ENCODE measurements at regions of chr10 and their contacts with region 1.

Region 1: DNA sequence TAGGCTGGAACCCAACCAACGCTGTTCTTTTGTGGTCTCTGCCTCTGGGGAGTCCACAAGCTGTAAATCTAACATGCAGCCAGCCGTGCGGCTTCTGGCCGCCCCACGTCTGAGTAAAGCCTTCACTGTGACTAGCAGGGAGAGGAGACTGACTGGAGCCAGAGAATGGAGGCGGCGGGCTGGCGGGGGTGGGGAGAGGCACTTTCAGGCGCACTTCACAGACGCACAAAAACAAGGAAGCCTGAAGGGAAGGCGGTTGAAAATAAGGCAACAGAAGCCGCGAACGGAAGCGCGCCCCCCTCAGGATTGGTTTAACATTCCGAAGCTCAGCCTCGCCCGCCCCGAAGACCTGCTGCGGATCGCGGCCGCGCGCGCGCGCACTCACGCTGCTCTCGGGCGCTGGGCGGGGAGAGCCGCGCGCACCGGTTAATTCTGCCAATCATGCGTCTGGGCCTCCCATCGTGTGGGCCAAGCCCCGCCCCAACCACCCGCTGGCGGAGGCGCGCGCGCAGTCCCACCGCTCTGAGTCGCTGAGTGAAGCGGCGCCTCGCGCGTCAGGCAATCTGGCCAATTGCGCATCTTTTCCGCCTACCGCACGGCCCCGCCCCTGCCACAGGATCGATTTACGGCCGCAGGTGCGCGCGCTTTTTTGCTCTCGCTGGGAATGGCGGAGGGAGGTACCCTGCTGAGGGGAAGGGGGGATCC is at the start of gene SFR1:
- DNase-seq: peak; percentile 98
- H3K27ac ChIP-seq: peak within 1 kb of the TSS; percentile 100
- CTCF ChIP-seq: peak; percentile 76

Region 2: DNA sequence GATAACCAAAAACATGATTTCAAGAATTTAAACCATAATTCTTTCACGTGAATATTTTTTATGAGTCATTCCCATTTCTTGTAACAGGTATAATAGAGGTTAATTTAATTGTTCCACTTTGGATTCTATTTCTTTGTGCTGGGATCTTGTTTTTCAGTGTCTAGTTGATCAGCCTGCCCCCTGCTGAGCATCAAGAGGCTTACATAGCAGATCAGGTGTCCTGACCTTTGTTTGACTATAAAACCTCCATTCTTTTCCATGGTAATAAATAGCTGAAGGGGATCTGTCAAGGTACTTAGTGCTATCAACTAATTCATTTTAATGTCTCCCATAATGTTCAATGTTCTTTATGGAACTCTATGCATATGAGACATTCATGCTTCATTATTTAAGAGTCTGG is 40.9 kb before region 1 on chr10:
- CTCF ChIA-PET with region 1: interaction called, 15 read pairs
- POLR2A ChIA-PET with region 1: interaction called, 8 read pairs
- DNase-seq: peak; percentile 42
- H3K27ac ChIP-seq: no peak overlapping the region
- CTCF ChIP-seq: no peak; the same call in 1 of the 2 replicates

Region 3: GRCh38 chr10:104092749-104093148 is 28.9 kb before region 1 on chr10:
- CTCF ChIA-PET with region 1: interaction called, 13 read pairs
- POLR2A ChIA-PET with region 1: interaction called, 4 read pairs
- DNase-seq: no peak
- H3K27ac ChIP-seq: no peak overlapping the region
- CTCF ChIP-seq: no peak

Region 4: GRCh38 chr10:104109908-104110662 is 11.6 kb before region 1 on chr10:
- CTCF ChIA-PET with region 1: interaction called, 11 read pairs
- POLR2A ChIA-PET with region 1: interaction called, 5 read pairs
- DNase-seq: peak; percentile 79
- H3K27ac ChIP-seq: no peak overlapping the region; the same call in 1 of the 2 replicates
- CTCF ChIP-seq: no peak

Measured in RWPE1 (cell line).